T-cell (primary cell): ENCODE measurements at regions of chr3 and their contacts with region 1.

Region 1: GRCh38 chr3:185659942-185660921 is 74.1 kb downstream of the SENP2 start:
- DNase-seq: peak in 34 of 35 experiments; percentile 6 to 73 (median 46)
- ATAC-seq: peak; percentile 56 to 80 (median 70)
- H3K4me3 ChIP-seq: no peak overlapping the region
- H3K4me3 Mint-ChIP-seq: no peak overlapping the region
- H3K27ac ChIP-seq: no peak overlapping the region
- H3K27ac Mint-ChIP-seq: no peak overlapping the region
- H3K4me1 ChIP-seq: peaks cover 0 to 7% of the 10 kb centered on the region in 2 experiments
- H3K4me1 Mint-ChIP-seq: peaks cover 0 to 5% (median 0%) of the 10 kb centered on the region in 3 donors
- H3K27me3 ChIP-seq: peaks cover 0 to 27% of the 10 kb centered on the region in 2 experiments
- H3K27me3 Mint-ChIP-seq: peaks cover 9 to 22% of the 10 kb centered on the region in 2 donors

Region 2: GRCh38 chr3:185606196-185606595 is 54.0 kb before region 1 on chr3:
- CTCF ChIA-PET with region 1: interaction called in 1 of 2 experiments, 16 read pairs
- POLR2A ChIA-PET with region 1: no interaction called
- DNase-seq: no peak
- ATAC-seq: no peak
- H3K4me3 ChIP-seq: no peak overlapping the region
- H3K4me3 Mint-ChIP-seq: no peak overlapping the region
- H3K27ac ChIP-seq: no peak overlapping the region
- H3K27ac Mint-ChIP-seq: no peak overlapping the region
- H3K4me1 ChIP-seq: no peaks in the 10 kb centered on the region
- H3K4me1 Mint-ChIP-seq: peaks cover 0 to 8% (median 4%) of the 10 kb centered on the region in 3 donors
- H3K27me3 ChIP-seq: no peaks in the 10 kb centered on the region
- H3K27me3 Mint-ChIP-seq: no peaks in the 10 kb centered on the region

Region 3: DNA sequence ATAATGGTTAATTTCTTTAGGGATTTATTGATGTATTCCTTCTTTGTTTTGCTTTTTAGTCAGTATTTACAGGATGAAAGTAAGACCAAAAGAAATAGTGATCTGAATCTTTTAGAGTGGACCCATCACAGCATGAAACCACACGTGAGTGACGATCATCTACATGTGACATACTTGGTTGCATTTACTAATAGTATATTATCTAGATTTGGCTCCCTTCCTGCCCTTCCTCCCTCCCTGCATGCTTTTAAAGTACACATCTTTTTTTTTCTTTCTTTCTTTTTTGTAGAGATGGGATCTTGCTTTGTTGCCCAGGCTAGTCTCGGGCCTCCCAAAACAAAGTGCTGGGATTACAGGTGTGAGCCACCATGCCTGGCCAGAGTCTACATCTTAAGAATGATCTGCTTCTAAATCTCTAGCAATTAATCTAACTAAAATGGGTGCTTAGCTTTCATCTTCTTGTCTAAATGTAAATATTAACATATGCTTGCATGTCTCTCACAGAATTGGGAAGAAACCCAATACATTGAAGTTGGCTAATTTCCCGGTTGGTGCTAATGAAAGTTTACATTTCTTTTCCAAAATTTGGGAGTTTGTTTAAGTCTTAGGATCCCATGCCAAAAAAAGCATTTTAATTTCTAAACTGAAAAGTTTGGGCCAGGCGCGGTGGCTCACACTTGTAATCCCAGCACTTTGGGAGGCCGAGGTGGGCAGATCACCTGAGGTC is 36.1 kb before region 1 on chr3:
- CTCF ChIA-PET with region 1: no interaction called
- POLR2A ChIA-PET with region 1: no interaction called
- DNase-seq: no peak
- ATAC-seq: no peak
- H3K4me3 ChIP-seq: no peak overlapping the region
- H3K4me3 Mint-ChIP-seq: no peak overlapping the region
- H3K27ac ChIP-seq: no peak overlapping the region
- H3K27ac Mint-ChIP-seq: no peak overlapping the region
- H3K4me1 ChIP-seq: no peaks in the 10 kb centered on the region
- H3K4me1 Mint-ChIP-seq: no peaks in the 10 kb centered on the region
- H3K27me3 ChIP-seq: no peaks in the 10 kb centered on the region
- H3K27me3 Mint-ChIP-seq: no peaks in the 10 kb centered on the region

Region 4: DNA sequence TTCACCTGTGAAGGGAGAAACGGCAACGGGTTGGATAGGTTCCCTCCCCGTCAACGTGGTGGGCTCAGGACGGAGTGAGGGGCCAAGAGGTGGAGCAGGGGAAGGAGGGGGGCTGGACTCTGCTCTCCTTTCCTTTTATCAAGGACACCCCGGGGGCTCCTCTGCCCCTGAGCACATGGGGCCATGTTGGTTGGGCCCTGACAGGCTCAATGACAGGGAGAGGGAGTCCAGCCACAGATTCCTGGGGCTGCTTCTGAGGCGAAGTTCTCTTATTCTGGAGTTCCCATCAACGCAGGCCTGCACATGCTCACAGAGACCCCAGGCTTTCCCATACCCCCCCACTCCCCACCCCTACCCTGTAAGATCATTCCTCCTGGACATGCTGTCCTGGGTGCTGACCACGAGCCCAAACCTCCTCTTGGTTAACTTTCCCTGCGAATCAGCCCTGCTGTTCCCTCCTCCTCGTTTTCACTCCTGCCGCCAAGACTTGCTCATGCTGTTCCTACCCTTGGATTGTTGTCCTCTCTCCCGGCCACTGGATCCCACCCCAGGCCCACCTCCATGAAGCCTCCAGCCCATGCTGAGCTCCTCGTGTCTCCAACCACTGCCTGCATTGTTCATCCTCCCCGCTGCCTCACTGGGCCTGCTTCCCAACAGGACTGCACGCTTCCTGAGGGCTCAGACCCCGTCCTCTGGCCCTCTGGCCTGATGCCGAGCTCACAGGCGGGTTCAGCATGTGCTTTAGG is 12.9 kb before region 1 on chr3:
- CTCF ChIA-PET with region 1: interaction called, 6 to 13 read pairs
- POLR2A ChIA-PET with region 1: no interaction called
- DNase-seq: no peak
- ATAC-seq: no peak
- H3K4me3 ChIP-seq: no peak overlapping the region
- H3K4me3 Mint-ChIP-seq: no peak overlapping the region
- H3K27ac ChIP-seq: no peak overlapping the region
- H3K27ac Mint-ChIP-seq: no peak overlapping the region
- H3K4me1 ChIP-seq: no peaks in the 10 kb centered on the region
- H3K4me1 Mint-ChIP-seq: no peaks in the 10 kb centered on the region
- H3K27me3 ChIP-seq: peaks cover 0 to 27% of the 10 kb centered on the region in 2 experiments
- H3K27me3 Mint-ChIP-seq: peaks cover 19 to 22% of the 10 kb centered on the region in 2 donors